WTC11 (cell line): ENCODE measurements at regions of chr7 and their contacts with region 1.

Region 1: DNA sequence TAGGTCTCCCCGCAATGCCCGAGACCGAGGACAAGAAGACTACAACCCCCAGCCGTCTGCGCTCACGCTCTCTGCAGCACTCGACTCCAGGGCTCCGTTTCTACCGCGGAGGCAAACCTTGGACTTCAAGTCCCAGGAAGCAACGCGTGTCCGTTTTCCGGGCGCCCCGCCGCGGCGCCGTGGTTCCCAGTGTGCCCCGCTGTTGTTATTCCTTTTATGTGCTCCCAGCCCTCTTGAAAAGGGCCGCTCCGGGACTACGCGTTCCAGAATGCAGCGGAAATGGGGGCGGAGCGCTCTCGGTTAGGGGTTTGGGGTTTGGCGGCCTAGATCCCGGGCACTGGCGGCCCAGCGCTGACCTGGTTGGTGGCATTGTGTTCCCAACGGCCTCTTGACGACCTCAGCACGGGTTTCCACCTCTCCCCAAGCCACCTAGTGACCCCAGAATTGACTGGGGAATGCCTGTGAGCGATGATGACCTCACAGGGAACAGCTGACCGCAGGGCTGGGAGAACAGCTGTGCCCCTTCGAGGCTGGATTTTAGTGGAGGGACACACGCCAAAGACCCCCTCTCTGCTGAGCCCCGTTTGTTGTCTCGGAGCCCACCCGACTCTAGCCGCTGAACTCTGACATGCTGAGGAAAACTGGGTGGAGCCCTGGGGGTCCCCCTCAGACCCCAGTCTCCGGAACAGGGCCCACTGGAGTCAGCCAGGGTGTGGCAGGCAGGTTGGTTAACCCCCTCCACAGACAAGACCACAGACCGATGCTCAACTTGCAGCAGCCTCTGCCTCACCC is 488 bp upstream of the CDK5 start:
- DNase-seq: peak; percentile 98
- ATAC-seq: peak; percentile 79
- H3K4me3 Mint-ChIP-seq: peak overlapping the region; percentile 98
- H3K27ac Mint-ChIP-seq: peak overlapping the region; percentile 93
- H3K4me1 Mint-ChIP-seq: peaks cover 38% of the 10 kb centered on the region
- H3K27me3 Mint-ChIP-seq: peaks cover 7% of the 10 kb centered on the region
- CTCF ChIP-seq: no peak

Region 2: GRCh38 chr7:151028131-151028947 is 29.8 kb before region 1 on chr7 and contains the start of gene ABCB8:
- CTCF ChIA-PET with region 1: interaction called, 22 read pairs
- POLR2A ChIA-PET with region 1: interaction called, 9 read pairs
- DNase-seq: peak; percentile 99
- ATAC-seq: peak; percentile 95
- H3K4me3 Mint-ChIP-seq: peak within 1 kb of the TSS; percentile 92
- H3K27ac Mint-ChIP-seq: peak within 1 kb of the TSS; percentile 99
- H3K4me1 Mint-ChIP-seq: peaks cover 24% of the 10 kb centered on the region
- H3K27me3 Mint-ChIP-seq: peaks cover 8% of the 10 kb centered on the region; the same call in 1 of the 2 replicates
- CTCF ChIP-seq: no peak
- total RNA-seq, gene ABCB8: 27.9 to 35.9 TPM (median 28.4 TPM) in 3 replicates

Region 3: DNA sequence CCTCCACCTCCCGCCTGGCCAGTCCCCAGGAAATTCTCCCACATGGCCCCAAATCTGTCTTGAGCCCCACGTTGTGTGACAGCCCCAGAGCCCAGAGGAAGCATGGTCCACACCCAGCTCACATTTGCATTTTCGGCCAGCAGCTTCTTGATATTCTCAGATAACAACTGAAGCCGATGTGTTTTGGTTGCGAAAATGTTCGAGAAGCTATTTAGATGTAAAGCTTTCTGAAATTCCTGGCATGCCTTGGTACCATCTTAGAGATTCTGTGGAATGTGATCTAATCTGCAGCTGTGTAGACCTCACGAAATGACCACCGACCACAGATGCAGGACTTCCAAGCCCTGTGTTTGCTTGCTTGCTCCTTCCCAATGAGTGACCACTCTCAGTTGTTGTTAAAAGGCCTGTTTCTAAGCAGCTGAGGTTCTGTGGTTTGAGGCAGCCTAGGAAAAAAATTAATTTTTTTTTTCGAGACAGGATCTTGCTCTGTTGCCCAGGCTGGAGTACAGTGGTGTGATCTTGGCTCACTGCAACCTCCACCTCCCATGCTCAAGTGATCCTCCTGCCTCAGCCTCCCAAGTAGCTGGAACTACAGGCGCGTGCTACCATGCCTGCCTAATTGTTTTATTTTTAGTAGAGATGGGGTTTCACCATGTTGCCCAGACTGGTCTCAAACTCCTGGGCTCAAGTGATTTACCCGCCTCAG is 10.0 kb after region 1 on chr7:
- CTCF ChIA-PET with region 1: interaction called, 10 read pairs
- POLR2A ChIA-PET with region 1: no interaction called
- DNase-seq: no peak
- ATAC-seq: peak; percentile 49
- H3K4me3 Mint-ChIP-seq: no peak overlapping the region
- H3K27ac Mint-ChIP-seq: peak overlapping the region; percentile 63
- H3K4me1 Mint-ChIP-seq: peaks cover 15% of the 10 kb centered on the region
- H3K27me3 Mint-ChIP-seq: no peaks in the 10 kb centered on the region
- CTCF ChIP-seq: no peak

Region 4: GRCh38 chr7:151080522-151081169 is 22.5 kb after region 1 on chr7 and contains the start of gene FASTK:
- CTCF ChIA-PET with region 1: interaction called, 36 read pairs
- POLR2A ChIA-PET with region 1: interaction called, 13 read pairs
- DNase-seq: peak; percentile 84
- ATAC-seq: peak; percentile 45
- H3K4me3 Mint-ChIP-seq: peak within 1 kb of the TSS; percentile 87
- H3K27ac Mint-ChIP-seq: peak within 1 kb of the TSS; percentile 85; the same call in 1 of the 2 replicates
- H3K4me1 Mint-ChIP-seq: peaks cover 43% of the 10 kb centered on the region
- H3K27me3 Mint-ChIP-seq: peaks cover 3% of the 10 kb centered on the region; the same call in 1 of the 2 replicates
- CTCF ChIP-seq: no peak
- total RNA-seq, gene FASTK: 62.1 to 70.2 TPM (median 67.7 TPM) in 3 replicates

Region 5: DNA sequence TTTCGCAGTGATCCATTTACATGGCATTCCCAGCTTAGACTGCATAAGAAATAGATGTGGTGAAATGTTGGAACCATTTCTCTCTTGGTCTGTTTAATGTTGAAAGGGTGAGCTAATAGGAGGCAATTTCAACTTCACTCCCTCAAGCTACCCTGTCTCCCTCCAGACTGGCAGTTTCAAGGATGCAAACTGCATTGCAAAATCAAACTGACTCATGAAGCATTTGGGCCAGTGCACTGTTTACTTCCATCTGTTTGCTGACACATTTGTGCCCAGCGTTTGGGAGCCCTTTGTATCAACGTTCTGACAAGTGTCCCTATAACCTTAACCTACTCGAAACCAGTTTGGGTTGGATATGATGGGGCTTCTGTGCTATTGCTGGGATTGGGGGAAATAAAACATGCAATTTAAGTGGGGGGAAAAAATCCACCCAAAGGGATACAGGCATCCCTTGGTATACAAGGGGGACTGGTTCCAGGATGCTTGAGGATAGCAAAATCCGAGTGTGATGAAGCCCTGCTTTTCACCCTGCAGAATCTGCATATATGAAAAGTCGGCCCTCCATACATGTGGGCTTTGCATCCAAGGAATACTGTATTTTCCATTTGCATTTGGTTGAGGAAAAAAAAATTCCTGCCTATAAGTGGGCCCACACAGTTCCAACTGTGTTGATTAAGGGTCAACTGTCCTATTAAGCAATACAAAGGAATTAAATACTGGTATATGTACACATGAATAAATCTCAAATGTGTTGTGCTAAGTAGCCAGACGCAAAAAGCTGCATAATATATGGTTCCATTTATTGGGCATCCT is 445.9 kb after region 1 on chr7:
- CTCF ChIA-PET with region 1: no interaction called
- POLR2A ChIA-PET with region 1: no interaction called
- DNase-seq: no peak
- ATAC-seq: no peak
- H3K4me3 Mint-ChIP-seq: no peak overlapping the region
- H3K27ac Mint-ChIP-seq: peak overlapping the region; percentile 21; the same call in 1 of the 2 replicates
- H3K4me1 Mint-ChIP-seq: peaks cover 89% of the 10 kb centered on the region
- H3K27me3 Mint-ChIP-seq: no peaks in the 10 kb centered on the region
- CTCF ChIP-seq: no peak